Activated naive CD4-positive, alpha-beta T cell treated with anti-CD3 and anti-CD28 coated beads for 36 hours (primary cell): ENCODE measurements at regions of chr15 and their contacts with region 1.

Region 1: GRCh38 chr15:45457641-45458433 is 64.7 kb downstream of the SLC30A4 start:
- DNase-seq: peak; percentile 90
- H3K4me3 Mint-ChIP-seq: peak overlapping the region; percentile 79
- H3K27ac Mint-ChIP-seq: peak overlapping the region; percentile 79
- H3K4me1 Mint-ChIP-seq: peaks cover 42% of the 10 kb centered on the region
- H3K27me3 Mint-ChIP-seq: no peaks in the 10 kb centered on the region

Region 2: GRCh38 chr15:45166834-45167630 is 290.8 kb before region 1 on chr15:
- CTCF ChIA-PET with region 1: interaction called, 7 read pairs
- intact Hi-C with region 1: loop called (anchors 1 kb)
- DNase-seq: peak; percentile 89
- H3K4me3 Mint-ChIP-seq: peak overlapping the region; percentile 69
- H3K27ac Mint-ChIP-seq: peak overlapping the region; percentile 66
- H3K4me1 Mint-ChIP-seq: peaks cover 10% of the 10 kb centered on the region
- H3K27me3 Mint-ChIP-seq: no peaks in the 10 kb centered on the region

Region 3: DNA sequence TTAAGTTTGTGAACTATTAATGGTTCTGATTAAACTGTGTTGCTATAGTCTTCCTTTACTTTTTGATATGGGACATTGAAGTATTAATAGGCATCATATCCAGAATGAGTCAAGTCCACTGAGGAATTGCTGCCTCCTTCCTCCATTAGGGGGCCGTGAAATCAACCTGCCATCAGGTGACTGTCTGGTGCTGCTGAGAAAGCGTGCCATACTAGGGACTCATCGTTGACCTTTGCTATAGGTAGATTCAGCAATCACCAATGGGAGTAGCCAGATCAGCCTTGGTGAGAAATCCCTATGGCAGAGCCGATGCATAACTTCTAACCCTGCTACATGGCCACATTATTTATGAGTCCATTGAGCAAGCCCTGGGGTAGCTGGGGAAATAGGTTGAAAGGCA is 235.9 kb before region 1 on chr15:
- CTCF ChIA-PET with region 1: no interaction called
- intact Hi-C with region 1: no loop called
- DNase-seq: no peak
- H3K4me3 Mint-ChIP-seq: no peak overlapping the region
- H3K27ac Mint-ChIP-seq: no peak overlapping the region
- H3K4me1 Mint-ChIP-seq: no peaks in the 10 kb centered on the region
- H3K27me3 Mint-ChIP-seq: peaks cover 5% of the 10 kb centered on the region

Region 4: DNA sequence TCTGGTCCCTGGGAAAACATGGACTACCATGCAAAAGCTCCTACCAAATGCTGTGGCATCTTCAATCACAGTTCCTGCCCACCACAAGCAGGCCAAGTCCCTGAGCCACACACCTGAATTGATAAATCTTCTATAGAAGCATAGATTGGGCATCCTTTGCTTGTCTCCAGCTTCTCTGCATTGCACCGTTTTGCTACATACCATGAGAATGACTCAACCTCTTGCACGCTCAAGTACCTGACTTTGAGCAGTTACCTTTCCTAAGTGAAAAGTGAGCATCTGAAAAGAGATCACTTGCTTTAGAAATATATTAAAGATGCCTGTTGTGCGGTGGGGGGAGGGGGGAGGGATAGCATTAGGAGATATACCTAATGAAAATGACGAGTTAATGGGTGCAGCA is 110.8 kb before region 1 on chr15:
- CTCF ChIA-PET with region 1: no interaction called
- intact Hi-C with region 1: no loop called
- DNase-seq: no peak
- H3K4me3 Mint-ChIP-seq: no peak overlapping the region
- H3K27ac Mint-ChIP-seq: no peak overlapping the region
- H3K4me1 Mint-ChIP-seq: no peaks in the 10 kb centered on the region
- H3K27me3 Mint-ChIP-seq: peaks cover 26% of the 10 kb centered on the region

Region 5: DNA sequence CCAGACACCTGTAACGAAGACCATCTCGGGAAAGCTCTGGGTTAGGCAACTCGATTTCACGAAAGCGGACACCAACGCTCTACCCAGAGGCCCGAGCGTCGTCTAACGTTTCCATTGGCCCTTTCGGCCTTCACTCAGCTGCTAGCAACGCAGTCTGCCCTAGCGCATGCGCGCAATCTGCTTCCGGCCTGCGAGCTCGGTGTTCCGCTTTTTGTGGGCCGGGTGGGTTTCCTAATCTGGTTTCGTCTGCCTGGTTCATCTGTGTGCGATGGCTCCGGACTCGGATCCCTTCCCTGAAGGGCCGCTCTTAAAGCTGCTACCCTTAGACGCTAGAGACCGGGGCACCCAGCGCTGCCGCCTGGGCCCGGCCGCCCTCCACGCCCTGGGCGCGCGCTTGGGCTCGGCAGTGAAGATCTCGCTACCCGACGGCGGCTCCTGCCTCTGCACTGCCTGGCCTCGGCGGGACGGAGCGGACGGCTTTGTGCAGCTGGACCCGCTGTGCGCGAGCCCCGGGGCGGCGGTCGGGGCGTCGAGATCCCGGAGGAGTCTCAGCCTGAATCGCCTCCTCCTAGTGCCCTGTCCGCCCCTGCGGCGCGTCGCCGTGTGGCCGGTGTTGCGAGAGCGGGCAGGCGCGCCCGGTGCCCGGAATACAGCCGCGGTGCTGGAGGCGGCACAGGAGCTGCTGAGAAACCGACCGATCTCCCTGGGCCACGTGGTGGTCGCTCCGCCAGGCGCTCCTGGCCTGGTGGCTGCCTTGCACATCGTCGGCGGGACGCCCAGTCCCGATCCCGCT is 55.5 kb before region 1 on chr15:
- CTCF ChIA-PET with region 1: interaction called, 6 read pairs
- intact Hi-C with region 1: loop called (anchors 1 kb)
- DNase-seq: peak; percentile 98
- H3K4me3 Mint-ChIP-seq: peak overlapping the region; percentile 99
- H3K27ac Mint-ChIP-seq: peak overlapping the region; percentile 89
- H3K4me1 Mint-ChIP-seq: peaks cover 27% of the 10 kb centered on the region
- H3K27me3 Mint-ChIP-seq: no peaks in the 10 kb centered on the region

Region 6: DNA sequence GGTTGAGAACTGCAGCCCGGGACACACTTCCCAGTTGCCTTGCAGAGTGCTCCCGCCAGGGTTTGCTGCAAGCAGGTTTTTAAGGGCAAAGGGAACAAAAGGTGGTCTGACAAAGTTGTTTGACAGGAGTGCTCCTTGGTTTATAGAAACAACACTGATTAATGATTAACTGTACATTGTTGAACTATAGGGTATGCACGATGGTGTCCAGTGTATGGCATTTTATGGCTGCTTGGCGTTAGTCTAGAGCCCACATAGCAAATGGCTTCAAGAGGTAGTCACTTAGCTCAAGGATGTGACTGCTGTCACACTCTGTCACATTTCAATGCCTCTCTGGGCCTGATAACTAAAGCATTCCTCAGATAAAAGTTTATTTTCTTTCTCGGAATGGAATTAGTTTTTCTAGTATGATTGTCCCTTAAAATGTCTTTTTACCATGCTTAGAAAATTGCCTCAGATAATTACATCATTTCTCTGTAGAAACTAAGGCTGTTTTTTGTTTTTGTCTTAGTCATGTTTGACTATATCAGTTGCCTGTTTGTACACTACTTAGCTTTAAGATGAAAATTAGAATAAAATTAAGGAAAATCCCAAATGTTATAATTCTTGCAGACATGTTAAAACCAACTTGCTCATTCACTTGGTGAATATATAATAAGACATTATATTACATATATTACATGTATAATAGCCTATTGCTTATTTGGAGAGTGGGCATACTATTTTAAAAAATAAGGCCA is 18.1 kb before region 1 on chr15:
- CTCF ChIA-PET with region 1: interaction called, 27 read pairs
- intact Hi-C with region 1: no loop called
- DNase-seq: no peak
- H3K4me3 Mint-ChIP-seq: no peak overlapping the region
- H3K27ac Mint-ChIP-seq: no peak overlapping the region
- H3K4me1 Mint-ChIP-seq: no peaks in the 10 kb centered on the region
- H3K27me3 Mint-ChIP-seq: no peaks in the 10 kb centered on the region

Region 7: GRCh38 chr15:45611305-45611704 is 153.5 kb after region 1 on chr15:
- CTCF ChIA-PET with region 1: interaction called, 102 read pairs
- intact Hi-C with region 1: loop called (anchors 1 kb)
- DNase-seq: no peak
- H3K4me3 Mint-ChIP-seq: no peak overlapping the region
- H3K27ac Mint-ChIP-seq: no peak overlapping the region
- H3K4me1 Mint-ChIP-seq: peaks cover 9% of the 10 kb centered on the region
- H3K27me3 Mint-ChIP-seq: no peaks in the 10 kb centered on the region

Region 8: GRCh38 chr15:45790325-45790943 is 332.6 kb after region 1 on chr15:
- CTCF ChIA-PET with region 1: no interaction called
- intact Hi-C with region 1: loop called (anchors 2 kb)
- DNase-seq: peak; percentile 47
- H3K4me3 Mint-ChIP-seq: no peak overlapping the region
- H3K27ac Mint-ChIP-seq: no peak overlapping the region
- H3K4me1 Mint-ChIP-seq: no peaks in the 10 kb centered on the region
- H3K27me3 Mint-ChIP-seq: peaks cover 10% of the 10 kb centered on the region

Region 9: GRCh38 chr15:45802140-45802539 is 344.3 kb after region 1 on chr15:
- CTCF ChIA-PET with region 1: no interaction called
- intact Hi-C with region 1: no loop called
- DNase-seq: no peak
- H3K4me3 Mint-ChIP-seq: no peak overlapping the region
- H3K27ac Mint-ChIP-seq: no peak overlapping the region
- H3K4me1 Mint-ChIP-seq: no peaks in the 10 kb centered on the region
- H3K27me3 Mint-ChIP-seq: peaks cover 6% of the 10 kb centered on the region